ENCODE measurements at regions of chr16 and their contacts with region 1.

Region 1: DNA sequence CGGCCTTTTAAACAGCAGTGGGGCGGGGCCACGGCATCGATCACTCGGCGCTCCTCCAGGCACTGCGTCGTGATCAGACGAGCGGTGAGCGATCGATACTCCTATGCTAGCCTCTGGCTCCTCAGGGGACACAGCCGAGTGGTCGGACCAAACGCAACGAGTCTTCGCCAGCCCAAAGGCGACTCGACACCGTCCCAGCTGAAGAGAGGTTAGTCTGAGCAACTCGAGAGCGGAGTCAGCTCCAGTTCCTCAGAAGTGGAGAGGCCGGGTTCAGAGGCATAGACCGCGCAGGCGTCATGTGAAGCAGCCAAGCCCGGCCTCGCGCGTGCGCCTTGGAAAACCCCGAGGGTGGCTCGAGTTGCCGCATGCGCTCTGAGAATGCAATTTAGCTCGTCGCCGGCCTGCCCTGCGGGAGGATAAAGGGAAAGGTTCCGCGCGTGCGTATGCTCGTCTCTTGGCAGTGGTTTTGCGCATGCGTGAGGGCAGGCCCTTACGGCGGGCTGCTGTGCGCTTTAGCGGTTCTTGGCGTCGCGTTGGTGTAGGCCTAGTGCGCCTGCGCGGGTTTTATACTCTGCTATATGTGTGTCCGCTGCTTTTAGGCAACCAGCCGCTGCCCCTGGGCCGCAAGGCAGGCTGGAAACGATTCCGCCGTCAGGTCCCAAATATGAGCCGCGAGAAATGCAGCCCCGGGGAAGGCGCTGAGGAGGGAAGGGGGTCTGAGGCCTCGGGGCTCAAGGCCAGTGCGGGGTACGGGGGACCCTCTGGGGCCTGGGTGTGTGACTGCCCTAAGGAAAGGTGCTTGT is at the start of gene KDM8:
- DNase-seq: peak; percentile 98

Region 2: GRCh38 chr16:27109666-27110523 is 93.7 kb before region 1 on chr16:
- CTCF ChIA-PET with region 1: no interaction called
- POLR2A ChIA-PET with region 1: no interaction called
- DNase-seq: peak; percentile 89

Region 3: GRCh38 chr16:27168790-27169189 is 34.8 kb before region 1 on chr16:
- CTCF ChIA-PET with region 1: no interaction called
- POLR2A ChIA-PET with region 1: no interaction called
- DNase-seq: no peak

Region 4: GRCh38 chr16:27179500-27180072 is 24.0 kb before region 1 on chr16:
- CTCF ChIA-PET with region 1: interaction called, 5 read pairs
- POLR2A ChIA-PET with region 1: interaction called, 11 read pairs
- DNase-seq: peak; percentile 84

Region 5: GRCh38 chr16:27189335-27189972 is 14.2 kb before region 1 on chr16:
- CTCF ChIA-PET with region 1: interaction called, 4 read pairs
- POLR2A ChIA-PET with region 1: interaction called, 14 read pairs
- DNase-seq: no peak